ENCODE measurements at regions of chr2 and their contacts with region 1.

Region 1: GRCh38 chr2:231925303-231926179 is 655 bp downstream of the NPPC start:
- DNase-seq: peak; percentile 68 to 84
- H3K4me3 ChIP-seq: peak overlapping the region; percentile 49
- H3K4me3 Mint-ChIP-seq: peak overlapping the region; percentile 65
- H3K27ac Mint-ChIP-seq: no peak overlapping the region
- H3K4me1 ChIP-seq: no peaks in the 10 kb centered on the region
- H3K4me1 Mint-ChIP-seq: no peaks in the 10 kb centered on the region
- H3K27me3 ChIP-seq: no peaks in the 10 kb centered on the region; the same call in 1 of the 2 replicates
- H3K27me3 Mint-ChIP-seq: peaks cover 11% of the 10 kb centered on the region
- CTCF ChIP-seq: peak; percentile 59 to 64

Region 2: GRCh38 chr2:231104115-231104713 is 821.3 kb before region 1 on chr2:
- CTCF ChIA-PET with region 1: no interaction called
- POLR2A ChIA-PET with region 1: no interaction called
- intact Hi-C with region 1: no loop called
- DNase-seq: peak in 1 of 2 experiments; percentile 46
- H3K4me3 ChIP-seq: no peak overlapping the region
- H3K4me3 Mint-ChIP-seq: no peak overlapping the region
- H3K27ac Mint-ChIP-seq: no peak overlapping the region
- H3K4me1 ChIP-seq: peaks cover 27% of the 10 kb centered on the region
- H3K4me1 Mint-ChIP-seq: peaks cover 13% of the 10 kb centered on the region
- H3K27me3 ChIP-seq: no peaks in the 10 kb centered on the region
- H3K27me3 Mint-ChIP-seq: no peaks in the 10 kb centered on the region
- CTCF ChIP-seq: peak; percentile 44 to 61

Region 3: GRCh38 chr2:231364961-231365810 is 560.4 kb before region 1 on chr2:
- CTCF ChIA-PET with region 1: no interaction called
- POLR2A ChIA-PET with region 1: no interaction called
- intact Hi-C with region 1: no loop called
- DNase-seq: peak; percentile 66 to 76
- H3K4me3 ChIP-seq: no peak overlapping the region
- H3K4me3 Mint-ChIP-seq: peak overlapping the region; percentile 63
- H3K27ac Mint-ChIP-seq: peak overlapping the region; percentile 84
- H3K4me1 ChIP-seq: peaks cover 20% of the 10 kb centered on the region
- H3K4me1 Mint-ChIP-seq: peaks cover 18% of the 10 kb centered on the region
- H3K27me3 ChIP-seq: no peaks in the 10 kb centered on the region
- H3K27me3 Mint-ChIP-seq: no peaks in the 10 kb centered on the region
- CTCF ChIP-seq: no peak

Region 4: GRCh38 chr2:231877533-231878456 is 47.7 kb before region 1 on chr2:
- CTCF ChIA-PET with region 1: no interaction called
- POLR2A ChIA-PET with region 1: no interaction called
- intact Hi-C with region 1: no loop called
- DNase-seq: no peak
- H3K4me3 ChIP-seq: no peak overlapping the region
- H3K4me3 Mint-ChIP-seq: no peak overlapping the region
- H3K27ac Mint-ChIP-seq: no peak overlapping the region
- H3K4me1 ChIP-seq: no peaks in the 10 kb centered on the region
- H3K4me1 Mint-ChIP-seq: no peaks in the 10 kb centered on the region
- H3K27me3 ChIP-seq: no peaks in the 10 kb centered on the region
- H3K27me3 Mint-ChIP-seq: no peaks in the 10 kb centered on the region
- CTCF ChIP-seq: no peak

Region 5: GRCh38 chr2:232126301-232127099 is 201.0 kb after region 1 on chr2:
- CTCF ChIA-PET with region 1: no interaction called
- POLR2A ChIA-PET with region 1: no interaction called
- intact Hi-C with region 1: no loop called
- DNase-seq: no peak
- H3K4me3 ChIP-seq: no peak overlapping the region
- H3K4me3 Mint-ChIP-seq: no peak overlapping the region
- H3K27ac Mint-ChIP-seq: no peak overlapping the region
- H3K4me1 ChIP-seq: no peaks in the 10 kb centered on the region
- H3K4me1 Mint-ChIP-seq: no peaks in the 10 kb centered on the region
- H3K27me3 ChIP-seq: no peaks in the 10 kb centered on the region
- H3K27me3 Mint-ChIP-seq: no peaks in the 10 kb centered on the region
- CTCF ChIP-seq: no peak

Region 6: DNA sequence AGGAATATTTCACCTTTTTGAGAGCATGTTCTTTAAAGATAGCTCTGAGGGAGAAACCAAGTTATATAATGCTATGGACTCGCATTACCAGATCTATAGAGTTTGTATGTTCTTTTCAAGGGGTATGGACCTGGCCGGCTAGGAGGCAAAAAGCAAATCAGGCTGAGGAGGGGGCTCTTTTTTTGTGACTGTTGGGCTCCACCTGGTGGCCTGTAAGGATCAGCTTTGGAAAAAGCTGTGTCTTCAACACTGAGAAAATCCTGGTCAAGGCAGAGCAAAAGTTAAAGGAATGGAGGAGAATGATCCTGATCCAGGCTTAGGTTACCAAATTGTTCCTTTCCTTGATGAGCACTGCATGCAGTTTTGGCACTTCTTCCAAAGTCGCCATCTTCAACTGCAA is 216.5 kb after region 1 on chr2:
- CTCF ChIA-PET with region 1: interaction called, 8 read pairs
- POLR2A ChIA-PET with region 1: no interaction called
- intact Hi-C with region 1: loop called (anchors 1 kb)
- DNase-seq: peak; percentile 27 to 36
- H3K4me3 ChIP-seq: no peak overlapping the region
- H3K4me3 Mint-ChIP-seq: no peak overlapping the region
- H3K27ac Mint-ChIP-seq: no peak overlapping the region
- H3K4me1 ChIP-seq: no peaks in the 10 kb centered on the region
- H3K4me1 Mint-ChIP-seq: no peaks in the 10 kb centered on the region
- H3K27me3 ChIP-seq: no peaks in the 10 kb centered on the region
- H3K27me3 Mint-ChIP-seq: no peaks in the 10 kb centered on the region
- CTCF ChIP-seq: peak in 1 of 2 experiments; percentile 65

Region 7: GRCh38 chr2:232327105-232328041 is 401.8 kb after region 1 on chr2:
- CTCF ChIA-PET with region 1: interaction called, 4 read pairs
- POLR2A ChIA-PET with region 1: no interaction called
- intact Hi-C with region 1: loop called (anchors 5 kb)
- DNase-seq: peak; percentile 56 to 79
- H3K4me3 ChIP-seq: no peak overlapping the region
- H3K4me3 Mint-ChIP-seq: no peak overlapping the region
- H3K27ac Mint-ChIP-seq: no peak overlapping the region
- H3K4me1 ChIP-seq: peaks cover 7% of the 10 kb centered on the region
- H3K4me1 Mint-ChIP-seq: no peaks in the 10 kb centered on the region
- H3K27me3 ChIP-seq: no peaks in the 10 kb centered on the region
- H3K27me3 Mint-ChIP-seq: no peaks in the 10 kb centered on the region
- CTCF ChIP-seq: peak; percentile 59 to 68

Region 8: GRCh38 chr2:232438951-232439757 is 513.6 kb after region 1 on chr2:
- CTCF ChIA-PET with region 1: no interaction called
- POLR2A ChIA-PET with region 1: no interaction called
- intact Hi-C with region 1: loop called (anchors 5 kb)
- DNase-seq: peak; percentile 48 to 63
- H3K4me3 ChIP-seq: no peak overlapping the region
- H3K4me3 Mint-ChIP-seq: no peak overlapping the region
- H3K27ac Mint-ChIP-seq: no peak overlapping the region
- H3K4me1 ChIP-seq: 0 out of 2 replicates have a peak, but pooled peaks cover 3% of the 10 kb centered on the region
- H3K4me1 Mint-ChIP-seq: no peaks in the 10 kb centered on the region
- H3K27me3 ChIP-seq: no peaks in the 10 kb centered on the region
- H3K27me3 Mint-ChIP-seq: no peaks in the 10 kb centered on the region
- CTCF ChIP-seq: peak; percentile 1 to 26